CD8-positive, alpha-beta T cell (primary cell): ENCODE measurements at regions of chrX and their contacts with region 1.

Region 1: GRCh38 chrX:76427560-76428242 is at the start of gene MAGEE1:
- DNase-seq: peak; percentile 73 to 89 (median 80)
- ATAC-seq: peak; percentile 72
- H3K4me3 ChIP-seq: peak within 1 kb of the TSS; percentile 74 to 85
- H3K4me3 Mint-ChIP-seq: peak within 1 kb of the TSS; percentile 91
- H3K27ac ChIP-seq: peak within 1 kb of the TSS; percentile 80 to 89
- H3K27ac Mint-ChIP-seq: peak within 1 kb of the TSS; percentile 93
- H3K4me1 ChIP-seq: peaks cover 30% of the 10 kb centered on the region
- H3K4me1 Mint-ChIP-seq: peaks cover 37% of the 10 kb centered on the region
- H3K27me3 ChIP-seq: no peaks in the 10 kb centered on the region
- H3K27me3 Mint-ChIP-seq: no peaks in the 10 kb centered on the region
- CTCF ChIP-seq: no peak
- total RNA-seq, gene MAGEE1: 11.4 to 14.1 TPM

Region 2: GRCh38 chrX:76454456-76454927 is 26.8 kb after region 1 on chrX:
- CTCF ChIA-PET with region 1: interaction called, 10 read pairs
- POLR2A ChIA-PET with region 1: no interaction called
- intact Hi-C with region 1: loop called in 1 of 2 experiments (anchors 2 kb)
- DNase-seq: peak in 3 of 9 experiments; percentile 0 to 50 (median 38)
- ATAC-seq: peak; percentile 58
- H3K4me3 ChIP-seq: no peak overlapping the region
- H3K4me3 Mint-ChIP-seq: no peak overlapping the region
- H3K27ac ChIP-seq: no peak overlapping the region
- H3K27ac Mint-ChIP-seq: no peak overlapping the region
- H3K4me1 ChIP-seq: no peaks in the 10 kb centered on the region
- H3K4me1 Mint-ChIP-seq: peaks cover 4% of the 10 kb centered on the region
- H3K27me3 ChIP-seq: no peaks in the 10 kb centered on the region
- H3K27me3 Mint-ChIP-seq: no peaks in the 10 kb centered on the region
- CTCF ChIP-seq: peak; percentile 55